Calu3 (cell line): ENCODE measurements at regions of chr10 and their contacts with region 1.

Region 1: DNA sequence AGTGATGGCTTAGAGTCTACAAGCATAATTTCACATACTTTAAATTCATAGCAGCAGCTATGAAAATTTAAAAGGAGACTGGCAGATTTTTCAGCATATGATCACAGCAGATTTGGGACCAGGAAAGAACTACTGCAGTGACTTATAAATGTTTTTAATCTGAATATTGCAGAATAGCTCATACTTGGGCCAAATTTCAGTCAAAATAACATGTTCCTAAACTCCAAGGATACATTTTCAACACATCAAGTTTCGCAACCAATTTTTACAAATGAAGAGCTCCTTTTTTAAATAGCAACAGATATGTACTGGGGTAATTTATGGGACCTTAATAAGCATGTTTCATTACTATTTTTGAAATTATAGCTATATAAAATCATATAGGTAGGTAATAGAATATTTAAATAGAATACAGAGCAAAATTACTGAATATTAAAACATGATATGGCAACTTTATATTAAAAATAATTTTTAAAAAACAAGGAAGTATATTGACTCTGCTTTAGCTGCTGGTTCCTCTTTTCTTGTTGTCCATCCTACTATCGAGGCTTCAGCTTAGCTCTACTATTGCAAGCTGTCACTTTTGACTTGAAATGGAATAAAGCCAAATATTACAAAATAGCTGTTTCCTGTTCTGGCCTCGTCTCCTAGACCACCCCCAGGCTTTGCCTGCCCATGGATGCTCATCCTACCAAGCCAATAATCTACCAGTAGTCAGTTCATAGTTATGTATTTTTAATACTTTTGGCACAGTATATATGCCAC is 123.1 kb downstream of the NRBF2 start:
- DNase-seq: no peak
- H3K4me3 Mint-ChIP-seq: no peak overlapping the region
- H3K27ac Mint-ChIP-seq: no peak overlapping the region
- H3K4me1 Mint-ChIP-seq: peaks cover 66% of the 10 kb centered on the region
- H3K27me3 Mint-ChIP-seq: no peaks in the 10 kb centered on the region
- CTCF ChIP-seq: no peak

Region 2: GRCh38 chr10:62384057-62384446 is 872.1 kb before region 1 on chr10:
- CTCF ChIA-PET with region 1: no interaction called
- intact Hi-C with region 1: no loop called
- DNase-seq: peak; percentile 73
- H3K4me3 Mint-ChIP-seq: peak overlapping the region; percentile 27
- H3K27ac Mint-ChIP-seq: peak overlapping the region; percentile 96
- H3K4me1 Mint-ChIP-seq: peaks cover 65% of the 10 kb centered on the region
- H3K27me3 Mint-ChIP-seq: no peaks in the 10 kb centered on the region
- CTCF ChIP-seq: no peak

Region 3: DNA sequence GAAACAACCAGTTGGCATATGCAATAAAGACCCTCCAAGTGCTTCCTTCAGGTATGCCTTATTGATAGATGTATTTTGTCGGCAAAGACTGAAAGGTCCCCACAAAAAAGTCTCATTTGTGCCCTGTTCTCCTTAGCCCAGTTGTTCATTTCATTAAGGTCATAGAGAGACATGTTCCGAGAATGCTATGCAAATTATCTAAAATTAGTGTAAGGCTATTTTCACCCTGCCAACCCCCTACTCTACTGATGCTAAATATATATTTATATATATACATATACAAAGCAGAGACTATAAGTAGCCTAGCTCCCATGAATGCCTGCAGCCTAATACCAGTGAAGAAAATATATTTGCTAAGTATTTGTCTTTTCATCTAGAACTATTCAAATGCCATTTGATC is 548.4 kb before region 1 on chr10:
- CTCF ChIA-PET with region 1: no interaction called
- intact Hi-C with region 1: no loop called
- DNase-seq: no peak
- H3K4me3 Mint-ChIP-seq: no peak overlapping the region
- H3K27ac Mint-ChIP-seq: no peak overlapping the region
- H3K4me1 Mint-ChIP-seq: peaks cover 18% of the 10 kb centered on the region
- H3K27me3 Mint-ChIP-seq: no peaks in the 10 kb centered on the region
- CTCF ChIP-seq: no peak

Region 4: GRCh38 chr10:63318491-63318890 is 62.3 kb after region 1 on chr10:
- CTCF ChIA-PET with region 1: no interaction called
- intact Hi-C with region 1: loop called (anchors 10 kb)
- DNase-seq: no peak
- H3K4me3 Mint-ChIP-seq: no peak overlapping the region
- H3K27ac Mint-ChIP-seq: peak overlapping the region; percentile 23
- H3K4me1 Mint-ChIP-seq: peaks cover 23% of the 10 kb centered on the region
- H3K27me3 Mint-ChIP-seq: no peaks in the 10 kb centered on the region
- CTCF ChIP-seq: no peak

Region 5: GRCh38 chr10:63614371-63614891 is 358.2 kb after region 1 on chr10:
- CTCF ChIA-PET with region 1: interaction called, 10 read pairs
- intact Hi-C with region 1: no loop called
- DNase-seq: no peak
- H3K4me3 Mint-ChIP-seq: no peak overlapping the region
- H3K27ac Mint-ChIP-seq: no peak overlapping the region
- H3K4me1 Mint-ChIP-seq: no peaks in the 10 kb centered on the region
- H3K27me3 Mint-ChIP-seq: no peaks in the 10 kb centered on the region
- CTCF ChIP-seq: no peak